CD8-positive, alpha-beta T cell (primary cell): ENCODE measurements at regions of chr12 and their contacts with region 1.

Region 1: GRCh38 chr12:47346251-47347019 is 266.7 kb upstream of the AMIGO2 start:
- DNase-seq: no peak
- ATAC-seq: no peak
- H3K4me3 ChIP-seq: no peak overlapping the region
- H3K4me3 Mint-ChIP-seq: no peak overlapping the region
- H3K27ac ChIP-seq: no peak overlapping the region
- H3K27ac Mint-ChIP-seq: no peak overlapping the region
- H3K4me1 ChIP-seq: peaks cover 34% of the 10 kb centered on the region
- H3K4me1 Mint-ChIP-seq: peaks cover 45% of the 10 kb centered on the region
- H3K27me3 ChIP-seq: no peaks in the 10 kb centered on the region
- H3K27me3 Mint-ChIP-seq: no peaks in the 10 kb centered on the region
- CTCF ChIP-seq: no peak

Region 2: GRCh38 chr12:47264951-47265350 is 81.5 kb before region 1 on chr12:
- CTCF ChIA-PET with region 1: no interaction called
- POLR2A ChIA-PET with region 1: no interaction called
- intact Hi-C with region 1: no loop called
- DNase-seq: no peak
- ATAC-seq: no peak
- H3K4me3 ChIP-seq: no peak overlapping the region
- H3K4me3 Mint-ChIP-seq: no peak overlapping the region
- H3K27ac ChIP-seq: no peak overlapping the region
- H3K27ac Mint-ChIP-seq: peak overlapping the region; percentile 18
- H3K4me1 ChIP-seq: peaks cover 27% of the 10 kb centered on the region
- H3K4me1 Mint-ChIP-seq: peaks cover 44% of the 10 kb centered on the region
- H3K27me3 ChIP-seq: no peaks in the 10 kb centered on the region
- H3K27me3 Mint-ChIP-seq: no peaks in the 10 kb centered on the region
- CTCF ChIP-seq: no peak

Region 3: DNA sequence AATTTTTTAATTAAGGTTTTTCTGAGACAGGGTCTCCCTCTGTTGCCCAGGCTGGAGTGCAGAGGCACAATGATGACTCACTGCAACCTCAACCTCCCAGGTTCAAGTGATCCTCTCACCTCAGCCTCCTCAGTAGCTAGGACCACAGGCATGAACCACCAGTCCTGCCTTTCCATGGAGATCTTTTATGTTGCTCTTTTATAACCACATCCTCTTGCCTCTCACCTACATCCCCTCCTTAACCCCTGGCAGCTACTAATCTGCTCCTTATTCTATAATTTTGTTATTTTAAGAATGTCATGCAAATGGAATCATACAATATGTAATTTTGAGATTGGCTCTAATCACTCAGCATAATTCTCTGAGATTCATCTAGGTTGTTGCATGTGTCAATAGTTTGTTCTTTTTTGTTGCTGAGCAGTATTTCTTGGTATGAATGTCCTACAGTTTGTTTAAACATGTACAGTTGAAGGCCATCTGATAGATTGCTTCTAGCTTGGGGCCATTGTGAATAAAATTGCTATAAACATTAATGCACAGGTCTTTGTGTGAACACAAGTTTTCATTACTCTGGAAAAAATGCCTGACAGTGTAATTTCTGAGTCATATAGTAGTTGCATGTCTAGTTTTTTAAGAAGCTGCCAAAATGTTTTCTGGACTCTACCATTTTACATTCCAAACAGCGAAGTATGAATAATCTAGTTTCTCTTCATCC is 17.4 kb before region 1 on chr12:
- CTCF ChIA-PET with region 1: no interaction called
- POLR2A ChIA-PET with region 1: no interaction called
- intact Hi-C with region 1: loop called in 1 of 2 experiments (anchors 1 kb)
- DNase-seq: no peak
- ATAC-seq: peak; percentile 23
- H3K4me3 ChIP-seq: no peak overlapping the region
- H3K4me3 Mint-ChIP-seq: no peak overlapping the region
- H3K27ac ChIP-seq: no peak overlapping the region
- H3K27ac Mint-ChIP-seq: no peak overlapping the region
- H3K4me1 ChIP-seq: peaks cover 8% of the 10 kb centered on the region
- H3K4me1 Mint-ChIP-seq: peaks cover 26% of the 10 kb centered on the region
- H3K27me3 ChIP-seq: no peaks in the 10 kb centered on the region
- H3K27me3 Mint-ChIP-seq: no peaks in the 10 kb centered on the region
- CTCF ChIP-seq: no peak

Region 4: DNA sequence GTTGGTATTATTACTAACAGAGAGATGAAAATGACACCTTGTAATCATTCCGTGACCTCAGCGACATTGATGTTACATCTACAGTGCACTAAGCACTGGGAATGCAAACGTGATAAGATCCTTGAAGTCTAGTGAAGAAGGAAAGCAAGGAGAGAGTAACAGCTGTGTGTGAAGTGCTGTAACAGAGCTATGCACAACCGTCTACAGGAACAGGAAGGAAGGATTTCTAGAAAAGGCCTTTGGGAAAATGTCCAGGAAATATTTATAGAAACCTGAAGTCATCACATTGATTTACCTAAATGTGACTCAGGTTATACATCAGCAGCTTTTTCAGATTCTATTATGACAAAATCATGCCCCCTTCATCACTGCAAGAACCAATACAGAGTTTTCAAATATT is 37.5 kb after region 1 on chr12:
- CTCF ChIA-PET with region 1: no interaction called
- POLR2A ChIA-PET with region 1: no interaction called
- intact Hi-C with region 1: loop called in 1 of 2 experiments (anchors 5 kb)
- DNase-seq: no peak
- ATAC-seq: no peak
- H3K4me3 ChIP-seq: no peak overlapping the region
- H3K4me3 Mint-ChIP-seq: no peak overlapping the region
- H3K27ac ChIP-seq: no peak overlapping the region
- H3K27ac Mint-ChIP-seq: no peak overlapping the region
- H3K4me1 ChIP-seq: peaks cover 11% of the 10 kb centered on the region
- H3K4me1 Mint-ChIP-seq: peaks cover 61% of the 10 kb centered on the region
- H3K27me3 ChIP-seq: no peaks in the 10 kb centered on the region
- H3K27me3 Mint-ChIP-seq: no peaks in the 10 kb centered on the region
- CTCF ChIP-seq: no peak